AG04450 (cell line): ENCODE measurements at regions of chr16 and their contacts with region 1.

Region 1: GRCh38 chr16:658679-659571 is 9.0 kb upstream of the RHOT2 start:
- DNase-seq: no peak
- H3K4me3 ChIP-seq: no peak overlapping the region
- H3K27ac ChIP-seq: no peak overlapping the region
- H3K27me3 ChIP-seq: no peaks in the 10 kb centered on the region
- CTCF ChIP-seq: no peak

Region 2: GRCh38 chr16:648071-648780 is 10.7 kb before region 1 on chr16:
- CTCF ChIA-PET with region 1: no interaction called
- POLR2A ChIA-PET with region 1: interaction called, 14 read pairs
- DNase-seq: no peak
- H3K4me3 ChIP-seq: peak overlapping the region; percentile 67
- H3K27ac ChIP-seq: peak overlapping the region; percentile 61
- H3K27me3 ChIP-seq: no peaks in the 10 kb centered on the region
- CTCF ChIP-seq: peak; percentile 29